ENCODE measurements at regions of chr20 and their contacts with region 1.

Region 1: DNA sequence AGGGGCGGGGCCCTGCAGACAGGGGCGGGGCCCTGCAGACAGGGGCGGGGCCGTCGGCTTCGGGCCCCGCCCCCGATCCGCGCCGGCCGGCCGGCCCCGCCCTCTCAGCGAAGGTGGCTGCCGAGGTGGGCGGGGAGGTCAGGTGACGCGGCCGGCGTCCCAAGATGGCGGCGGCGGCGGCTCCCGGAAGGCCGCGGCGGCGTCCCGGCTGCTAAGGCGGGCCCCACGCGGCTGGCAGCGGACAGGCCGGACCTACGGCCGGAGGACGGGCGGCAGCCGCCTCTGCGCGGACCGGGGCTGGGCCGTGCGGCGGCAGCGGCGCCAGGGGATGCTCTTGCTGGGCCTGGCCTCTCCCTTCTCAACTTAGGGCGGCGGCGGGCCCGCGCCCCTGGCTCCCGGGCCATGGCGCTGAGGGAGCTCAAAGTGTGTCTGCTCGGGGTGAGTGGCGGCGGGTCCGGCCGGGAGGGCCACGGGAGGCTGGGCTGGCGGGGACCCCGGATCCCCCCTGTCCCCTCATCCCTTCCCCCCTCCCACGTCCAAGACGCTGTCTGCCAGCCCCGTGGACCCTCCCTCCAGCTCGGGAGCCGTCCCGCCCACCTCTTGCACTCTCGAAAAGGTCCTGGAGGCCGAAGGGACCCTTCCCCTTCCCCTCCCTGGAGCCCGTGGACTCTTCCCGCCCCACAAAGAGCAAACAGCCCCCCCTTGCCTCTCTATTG is at the start of gene RAB22A:
- DNase-seq: peak; percentile 81
- H3K4me3 Mint-ChIP-seq: peak within 1 kb of the TSS; percentile 93
- H3K27ac Mint-ChIP-seq: peak within 1 kb of the TSS; percentile 90
- H3K4me1 Mint-ChIP-seq: peaks cover 72% of the 10 kb centered on the region
- H3K27me3 Mint-ChIP-seq: no peaks in the 10 kb centered on the region
- total RNA-seq, gene RAB22A: 9.3 to 9.8 TPM

Region 2: DNA sequence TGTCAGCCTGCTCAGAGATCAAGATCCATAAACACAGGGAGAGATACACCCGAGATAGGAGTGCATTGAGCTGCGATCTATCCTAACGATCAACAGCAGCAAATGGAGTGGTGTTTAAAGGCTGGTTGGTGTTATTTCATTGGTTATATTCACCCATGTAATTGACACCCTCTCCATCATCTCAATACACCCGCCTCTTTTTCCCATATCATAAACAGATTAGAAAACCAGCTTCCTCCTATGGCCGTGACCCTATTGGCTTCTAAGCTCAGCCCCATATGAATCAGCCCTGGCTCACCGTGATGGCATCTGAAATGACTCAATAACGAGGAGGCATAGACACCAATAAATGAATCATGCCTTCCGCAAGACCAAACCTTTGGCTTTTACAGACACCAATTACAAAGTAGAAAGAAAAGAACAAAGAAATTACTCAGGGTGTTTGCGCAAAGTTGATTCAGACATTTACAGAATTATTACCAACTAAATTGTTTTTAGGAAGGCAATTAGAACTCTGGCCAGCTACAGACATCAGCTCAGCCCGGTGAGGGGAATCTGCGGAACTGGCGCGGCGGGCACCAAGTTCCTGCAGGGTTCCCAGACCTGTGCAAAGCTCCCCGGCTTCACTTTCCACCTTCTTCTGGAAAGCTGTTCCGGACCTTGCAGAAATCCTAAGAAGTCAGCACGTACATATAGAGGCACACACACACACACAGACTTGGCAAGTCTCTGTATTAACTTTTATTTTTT is 611.4 kb before region 1 on chr20:
- CTCF ChIA-PET with region 1: no interaction called
- intact Hi-C with region 1: loop called (anchors 1 kb)
- DNase-seq: peak; percentile 92
- H3K4me3 Mint-ChIP-seq: no peak overlapping the region
- H3K27ac Mint-ChIP-seq: peak overlapping the region; percentile 85
- H3K4me1 Mint-ChIP-seq: peaks cover 44% of the 10 kb centered on the region
- H3K27me3 Mint-ChIP-seq: no peaks in the 10 kb centered on the region

Region 3: GRCh38 chr20:58271606-58272402 is 37.9 kb before region 1 on chr20:
- CTCF ChIA-PET with region 1: interaction called, 3 read pairs
- intact Hi-C with region 1: loop called (anchors 1 kb)
- DNase-seq: peak; percentile 78
- H3K4me3 Mint-ChIP-seq: no peak overlapping the region
- H3K27ac Mint-ChIP-seq: peak overlapping the region; percentile 35
- H3K4me1 Mint-ChIP-seq: peaks cover 38% of the 10 kb centered on the region
- H3K27me3 Mint-ChIP-seq: no peaks in the 10 kb centered on the region

Region 4: DNA sequence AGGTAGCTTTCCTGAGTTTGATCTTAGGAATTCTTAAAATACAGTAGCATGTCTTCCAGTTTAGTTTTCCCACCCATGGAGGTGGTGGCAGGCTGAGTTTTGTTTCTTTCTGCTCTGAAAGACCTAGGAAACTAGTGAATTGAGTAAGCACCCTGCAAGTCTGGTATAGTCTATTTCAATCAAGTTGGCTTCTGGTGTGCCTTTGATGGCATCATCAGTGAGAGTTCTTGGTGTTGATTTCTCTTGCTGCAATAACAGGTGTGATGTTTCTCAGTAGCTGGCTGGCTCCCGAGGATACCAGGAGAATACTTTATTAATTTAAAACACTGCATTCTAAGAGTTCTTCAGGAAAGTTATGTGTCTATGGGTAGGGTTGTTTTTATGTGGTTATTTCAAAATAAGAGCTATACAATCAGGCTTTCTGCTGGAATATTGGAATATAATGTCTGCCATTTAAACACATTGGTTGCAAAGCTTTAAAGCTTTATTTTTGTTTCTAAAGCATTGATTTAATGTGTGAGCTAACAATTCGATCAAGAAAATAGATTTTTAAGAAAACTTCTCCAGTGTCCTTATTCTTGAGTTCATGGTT is 98.3 kb after region 1 on chr20:
- CTCF ChIA-PET with region 1: no interaction called
- intact Hi-C with region 1: loop called (anchors 1 kb)
- DNase-seq: peak; percentile 63
- H3K4me3 Mint-ChIP-seq: peak overlapping the region; percentile 7
- H3K27ac Mint-ChIP-seq: peak overlapping the region; percentile 81
- H3K4me1 Mint-ChIP-seq: peaks cover 30% of the 10 kb centered on the region
- H3K27me3 Mint-ChIP-seq: no peaks in the 10 kb centered on the region

Region 5: DNA sequence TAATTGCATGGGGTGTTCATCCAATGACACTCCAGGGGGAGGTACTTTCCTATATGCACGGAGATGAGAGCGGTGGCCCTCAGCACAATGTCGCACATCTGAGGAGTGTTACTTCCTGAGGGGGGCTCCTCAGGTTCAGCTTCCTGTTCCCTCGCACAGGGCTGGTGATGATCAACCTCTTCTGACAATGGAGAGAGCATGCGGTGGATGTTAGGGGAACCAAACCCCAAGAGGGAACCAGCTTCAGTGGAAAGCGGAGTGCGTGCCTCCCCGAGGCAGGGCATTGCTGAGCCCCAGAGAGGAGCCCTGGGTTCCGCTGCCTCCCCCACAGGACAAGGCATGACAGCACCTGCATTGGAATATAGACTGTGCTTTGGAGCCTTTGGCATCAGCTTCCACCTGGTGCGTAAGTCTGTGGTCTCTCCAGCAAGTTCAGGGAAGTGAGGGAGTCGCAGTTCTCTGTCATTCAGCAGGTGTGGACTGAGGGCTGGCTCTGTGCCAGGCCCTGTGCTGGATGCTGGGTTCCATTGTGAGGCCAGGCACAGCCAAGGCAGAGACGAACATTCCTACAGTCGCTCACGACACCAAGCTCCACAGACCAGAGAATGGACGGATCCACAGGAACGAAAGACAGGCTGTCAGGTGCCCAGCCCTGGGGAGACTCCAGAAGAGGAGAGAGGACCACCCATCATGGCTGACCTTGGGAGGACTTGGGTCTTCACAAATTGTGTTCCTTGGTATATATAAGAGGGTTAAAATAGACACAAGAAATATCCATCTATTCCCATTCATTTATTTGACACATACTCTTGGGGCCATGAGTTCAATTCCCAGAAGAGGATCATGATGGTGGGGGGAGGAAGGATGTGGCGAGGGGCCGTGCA is 850.0 kb after region 1 on chr20:
- CTCF ChIA-PET with region 1: no interaction called
- intact Hi-C with region 1: loop called (anchors 5 kb)
- DNase-seq: peak; percentile 87
- H3K4me3 Mint-ChIP-seq: peak overlapping the region; percentile 90
- H3K27ac Mint-ChIP-seq: peak overlapping the region; percentile 94
- H3K4me1 Mint-ChIP-seq: peaks cover 80% of the 10 kb centered on the region
- H3K27me3 Mint-ChIP-seq: no peaks in the 10 kb centered on the region

Measured in activated naive CD4-positive, alpha-beta T cell treated with anti-CD3 and anti-CD28 coated beads for 36 hours (primary cell).